ENCODE measurements at regions of chr14 and their contacts with region 1.

Region 1: DNA sequence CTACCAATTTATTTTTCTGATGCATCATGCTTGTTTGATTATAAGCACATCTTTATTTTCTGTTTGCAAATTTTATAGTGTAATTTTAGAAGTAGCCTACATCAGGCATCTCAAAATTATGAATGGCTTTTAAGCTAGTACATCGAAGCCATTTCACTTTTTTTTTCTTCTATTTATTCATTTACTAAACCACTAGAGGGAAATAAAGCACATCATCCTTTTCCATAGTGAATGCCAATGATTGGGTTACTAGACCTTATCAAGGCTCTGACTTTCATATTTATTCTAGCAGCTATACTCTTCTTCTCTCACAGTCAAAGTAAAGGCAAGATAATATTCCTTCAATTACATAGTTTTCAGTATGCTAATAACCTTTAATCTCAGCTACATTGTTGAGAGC is 736.4 kb upstream of the LRFN5 start:
- DNase-seq: no peak
- ATAC-seq: no peak
- H3K4me3 ChIP-seq: no peak overlapping the region
- H3K27ac ChIP-seq: no peak overlapping the region
- H3K4me1 ChIP-seq: no peaks in the 10 kb centered on the region
- H3K27me3 ChIP-seq: no peaks in the 10 kb centered on the region
- CTCF ChIP-seq: no peak

Region 2: DNA sequence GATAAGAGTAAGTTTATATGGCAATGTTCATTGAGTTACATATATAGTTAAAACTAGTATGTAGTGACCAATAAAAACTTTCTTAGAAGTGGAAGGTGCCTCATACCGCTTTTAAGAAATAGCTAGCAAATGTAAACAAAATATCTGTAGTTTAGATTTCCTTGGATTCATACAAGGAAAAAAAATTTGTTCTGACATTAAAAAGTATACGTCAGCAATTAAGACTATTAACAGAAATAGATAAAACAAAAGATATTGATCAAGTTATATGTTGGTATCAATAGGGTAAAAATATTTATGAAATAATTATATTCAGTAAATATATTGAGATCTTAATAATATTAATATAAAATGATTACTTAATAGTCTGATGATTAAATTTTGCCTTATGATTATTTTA is 17.7 kb after region 1 on chr14:
- intact Hi-C with region 1: no loop called
- DNase-seq: no peak
- ATAC-seq: no peak
- H3K4me3 ChIP-seq: no peak overlapping the region
- H3K27ac ChIP-seq: no peak overlapping the region
- H3K4me1 ChIP-seq: no peaks in the 10 kb centered on the region
- H3K27me3 ChIP-seq: no peaks in the 10 kb centered on the region
- CTCF ChIP-seq: no peak

Region 3: DNA sequence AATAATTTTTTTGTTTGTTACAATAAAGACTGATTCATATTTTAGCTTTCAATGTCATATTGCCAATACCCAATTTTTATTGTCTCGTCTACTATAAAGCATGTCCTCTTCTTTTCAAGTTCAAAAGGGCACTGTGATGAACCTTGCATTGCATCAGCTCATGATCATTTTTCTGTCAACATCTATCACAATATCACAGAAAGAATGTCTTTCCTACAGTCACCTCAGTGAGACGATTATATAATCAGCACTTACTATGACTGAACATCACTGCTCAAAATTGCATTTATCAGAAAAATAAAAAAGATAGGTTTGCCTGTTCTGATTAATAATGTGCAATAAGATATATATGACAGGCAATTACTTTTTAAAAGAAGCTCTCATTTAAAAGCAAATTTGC is 507.7 kb after region 1 on chr14:
- intact Hi-C with region 1: loop called in 1 of 10 experiments (anchors 10 kb)
- DNase-seq: no peak
- ATAC-seq: no peak
- H3K4me3 ChIP-seq: no peak overlapping the region
- H3K27ac ChIP-seq: no peak overlapping the region
- H3K4me1 ChIP-seq: no peaks in the 10 kb centered on the region
- H3K27me3 ChIP-seq: no peaks in the 10 kb centered on the region
- CTCF ChIP-seq: no peak